GM10248 (cell line): ENCODE measurements at regions of chr7 and their contacts with region 1.

Region 1: GRCh38 chr7:77812290-77812685 is 13.7 kb downstream of the PHTF2 start:
- DNase-seq: no peak
- CTCF ChIP-seq: no peak

Region 2: DNA sequence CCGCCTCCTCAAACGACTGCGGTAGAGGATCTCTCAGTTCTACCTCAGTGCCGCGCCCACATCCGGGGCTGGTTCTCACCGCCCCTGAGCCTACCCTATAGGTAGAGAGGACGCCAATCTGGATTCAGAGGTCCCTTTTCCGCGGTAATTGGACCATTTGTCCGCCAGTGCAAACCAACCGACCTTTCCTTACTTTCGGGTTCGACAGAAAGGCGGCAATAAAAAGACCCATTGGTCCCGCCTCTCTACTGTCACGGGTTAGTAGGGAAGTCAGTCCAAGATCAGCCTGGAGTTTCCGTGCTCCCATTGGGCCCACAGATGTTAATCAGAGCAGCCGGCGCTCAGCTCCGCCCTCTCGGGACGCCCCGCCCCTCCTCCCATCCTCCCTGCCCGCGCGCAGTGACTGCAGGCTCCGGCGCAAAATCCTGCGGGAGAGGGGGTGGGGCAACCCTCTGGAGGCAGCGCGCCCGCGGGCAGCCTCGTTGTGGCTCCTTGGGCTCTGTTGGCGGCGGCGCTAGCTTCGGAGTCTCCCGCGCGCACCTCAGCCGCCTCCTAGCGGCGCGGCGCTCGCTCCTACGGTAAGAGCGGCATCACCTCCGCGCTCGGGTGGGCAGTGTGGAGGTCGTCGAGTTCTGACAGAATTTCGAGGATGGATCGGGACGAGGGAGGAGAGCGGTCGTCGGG is 13.8 kb before region 1 on chr7 and contains the starts of genes PHTF2 and TMEM60:
- CTCF ChIA-PET with region 1: interaction called, 14 read pairs
- POLR2A ChIA-PET with region 1: no interaction called
- DNase-seq: peak; percentile 94
- CTCF ChIP-seq: peak; percentile 54

Region 3: DNA sequence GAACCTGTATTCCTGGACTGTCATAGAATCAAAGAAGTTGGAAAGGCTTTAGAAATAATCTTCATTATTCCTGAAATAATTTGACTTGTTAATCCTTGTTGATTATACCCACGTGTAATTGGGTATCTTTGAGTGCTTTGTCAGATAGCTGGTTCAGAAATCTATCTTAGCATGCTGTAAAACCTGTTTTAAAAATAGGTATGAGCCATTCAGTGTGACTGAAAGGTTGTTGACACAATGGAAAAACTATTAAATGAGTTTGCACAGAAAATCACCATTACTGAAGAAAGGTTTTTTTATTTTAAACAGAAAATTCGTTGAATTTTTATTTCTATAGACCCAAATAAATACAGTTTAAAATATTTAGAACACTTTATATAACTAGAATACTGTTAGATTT is 25.0 kb after region 1 on chr7:
- CTCF ChIA-PET with region 1: no interaction called
- POLR2A ChIA-PET with region 1: no interaction called
- DNase-seq: no peak
- CTCF ChIP-seq: no peak

Region 4: GRCh38 chr7:77894574-77895091 is 82.3 kb after region 1 on chr7:
- CTCF ChIA-PET with region 1: no interaction called
- POLR2A ChIA-PET with region 1: no interaction called
- DNase-seq: no peak
- CTCF ChIP-seq: no peak

Region 5: GRCh38 chr7:77954773-77955555 is 142.7 kb after region 1 on chr7:
- CTCF ChIA-PET with region 1: no interaction called
- POLR2A ChIA-PET with region 1: no interaction called
- DNase-seq: no peak
- CTCF ChIP-seq: no peak

Region 6: GRCh38 chr7:78315119-78315518 is 502.8 kb after region 1 on chr7:
- CTCF ChIA-PET with region 1: no interaction called
- POLR2A ChIA-PET with region 1: no interaction called
- DNase-seq: no peak
- CTCF ChIP-seq: no peak